PC-9 (cell line): ENCODE measurements at regions of chr9 and their contacts with region 1.

Region 1: GRCh38 chr9:134738869-134739659 is 97.5 kb downstream of the COL5A1 start:
- DNase-seq: peak in 1 of 2 experiments; percentile 70
- H3K4me3 ChIP-seq: no peak overlapping the region
- H3K27ac ChIP-seq: no peak overlapping the region
- H3K4me1 ChIP-seq: no peaks in the 10 kb centered on the region
- H3K27me3 ChIP-seq: peaks cover 72% of the 10 kb centered on the region
- CTCF ChIP-seq: peak; percentile 87

Region 2: GRCh38 chr9:134175808-134176598 is 563.1 kb before region 1 on chr9:
- CTCF ChIA-PET with region 1: interaction called, 12 read pairs
- POLR2A ChIA-PET with region 1: no interaction called
- intact Hi-C with region 1: no loop called
- DNase-seq: peak in 1 of 2 experiments; percentile 23
- H3K4me3 ChIP-seq: no peak overlapping the region
- H3K27ac ChIP-seq: no peak overlapping the region
- H3K4me1 ChIP-seq: no peaks in the 10 kb centered on the region
- H3K27me3 ChIP-seq: peaks cover 42% of the 10 kb centered on the region
- CTCF ChIP-seq: no peak

Region 3: GRCh38 chr9:134344068-134344799 is 394.8 kb before region 1 on chr9:
- CTCF ChIA-PET with region 1: no interaction called
- POLR2A ChIA-PET with region 1: no interaction called
- intact Hi-C with region 1: no loop called
- DNase-seq: no peak
- H3K4me3 ChIP-seq: no peak overlapping the region
- H3K27ac ChIP-seq: no peak overlapping the region
- H3K4me1 ChIP-seq: no peaks in the 10 kb centered on the region
- H3K27me3 ChIP-seq: no peaks in the 10 kb centered on the region
- CTCF ChIP-seq: no peak

Region 4: GRCh38 chr9:134413890-134414731 is 325.0 kb before region 1 on chr9:
- CTCF ChIA-PET with region 1: no interaction called
- POLR2A ChIA-PET with region 1: no interaction called
- intact Hi-C with region 1: no loop called
- DNase-seq: peak in 1 of 2 experiments; percentile 81
- H3K4me3 ChIP-seq: no peak overlapping the region
- H3K27ac ChIP-seq: no peak overlapping the region
- H3K4me1 ChIP-seq: peaks cover 47% of the 10 kb centered on the region
- H3K27me3 ChIP-seq: no peaks in the 10 kb centered on the region
- CTCF ChIP-seq: no peak

Region 5: GRCh38 chr9:134968011-134968822 is 229.2 kb after region 1 on chr9:
- CTCF ChIA-PET with region 1: no interaction called
- POLR2A ChIA-PET with region 1: interaction called, 11 read pairs
- intact Hi-C with region 1: no loop called
- DNase-seq: no peak
- H3K4me3 ChIP-seq: no peak overlapping the region
- H3K27ac ChIP-seq: no peak overlapping the region
- H3K4me1 ChIP-seq: no peaks in the 10 kb centered on the region
- H3K27me3 ChIP-seq: peaks cover 97% of the 10 kb centered on the region
- CTCF ChIP-seq: no peak

Region 6: DNA sequence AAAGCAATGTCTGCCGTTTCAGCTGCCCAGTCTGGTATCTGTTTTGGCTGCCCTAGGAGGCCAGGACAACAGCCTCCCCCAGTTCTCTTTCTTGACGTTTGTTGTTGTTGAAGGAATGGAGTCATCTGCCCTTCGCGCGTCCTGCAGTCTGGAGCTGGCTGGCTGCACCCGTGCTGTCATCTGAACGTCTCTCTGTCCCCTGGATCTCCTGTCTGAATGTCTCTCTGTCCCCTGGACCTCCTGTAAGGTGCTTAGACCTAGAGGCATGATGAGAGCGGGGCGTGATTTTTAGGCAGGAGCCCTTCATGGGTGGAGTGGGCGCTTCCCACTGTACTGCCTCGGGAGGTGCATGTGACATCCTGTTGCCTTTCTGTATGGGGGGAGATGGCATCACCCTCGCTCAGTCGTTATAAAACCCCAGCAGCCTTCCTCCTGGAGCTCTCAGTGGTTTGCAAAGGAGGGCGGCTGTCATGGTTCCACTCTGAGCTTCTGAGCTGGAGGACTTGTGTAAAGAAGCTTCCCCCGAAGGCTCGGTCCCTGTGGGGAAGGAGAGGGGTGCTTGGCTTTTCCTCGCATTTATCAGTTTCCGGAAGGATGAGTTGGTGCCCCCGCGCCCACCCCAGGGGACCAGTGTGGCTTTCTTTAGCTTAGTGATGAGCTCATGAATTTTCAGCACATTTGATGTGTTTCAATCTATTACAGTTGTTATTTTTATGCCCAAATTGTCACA is 298.6 kb after region 1 on chr9:
- CTCF ChIA-PET with region 1: no interaction called
- POLR2A ChIA-PET with region 1: no interaction called
- intact Hi-C with region 1: no loop called
- DNase-seq: no peak
- H3K4me3 ChIP-seq: no peak overlapping the region
- H3K27ac ChIP-seq: no peak overlapping the region
- H3K4me1 ChIP-seq: no peaks in the 10 kb centered on the region
- H3K27me3 ChIP-seq: peaks cover 89% of the 10 kb centered on the region
- CTCF ChIP-seq: no peak